CD8-positive, alpha-beta T cell (primary cell): ENCODE measurements at regions of chr6 and their contacts with region 1.

Region 1: DNA sequence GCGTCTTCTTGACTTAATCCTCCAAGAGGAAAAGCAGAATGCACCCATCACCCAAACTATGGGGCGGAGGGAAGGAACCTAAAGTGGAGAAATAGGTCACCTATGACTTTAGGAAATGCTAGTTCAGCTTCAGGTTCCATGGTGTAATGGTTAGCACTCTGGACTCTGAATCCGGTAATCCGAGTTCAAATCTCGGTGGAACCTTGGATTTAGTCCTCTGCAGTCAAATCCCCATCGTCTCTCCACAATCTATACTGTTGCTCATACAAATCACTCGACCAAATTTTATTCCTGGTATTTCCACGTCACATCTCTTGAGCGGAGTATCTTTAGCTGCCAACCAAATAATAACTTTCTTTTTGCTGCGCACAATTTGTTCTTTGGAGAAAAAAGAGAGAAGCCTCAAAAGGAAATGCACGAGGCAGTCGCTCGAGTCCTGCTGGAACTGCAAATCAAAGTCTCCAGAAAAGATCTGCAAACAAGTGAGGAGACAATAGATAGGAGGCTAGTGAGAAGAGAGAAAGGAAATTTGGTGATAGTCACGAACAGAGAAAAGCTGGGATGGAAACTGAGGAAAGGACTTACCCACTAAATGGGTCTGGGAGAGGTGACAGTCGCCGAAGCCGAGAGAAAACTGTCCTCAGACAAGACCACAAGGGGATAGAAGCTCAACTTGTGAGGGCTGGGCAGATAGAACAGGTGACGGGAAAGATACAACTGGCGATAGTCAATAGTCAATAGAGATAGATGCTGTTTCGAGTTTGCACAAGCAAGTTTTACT is 16.6 kb downstream of the POM121L2 start:
- DNase-seq: no peak
- ATAC-seq: no peak
- H3K4me3 ChIP-seq: no peak overlapping the region
- H3K4me3 Mint-ChIP-seq: no peak overlapping the region
- H3K27ac ChIP-seq: no peak overlapping the region
- H3K27ac Mint-ChIP-seq: peak overlapping the region; percentile 6
- H3K4me1 ChIP-seq: no peaks in the 10 kb centered on the region
- H3K4me1 Mint-ChIP-seq: no peaks in the 10 kb centered on the region
- H3K27me3 ChIP-seq: peaks cover 53 to 65% of the 10 kb centered on the region in 2 experiments
- H3K27me3 Mint-ChIP-seq: peaks cover 86% of the 10 kb centered on the region
- CTCF ChIP-seq: no peak

Region 2: GRCh38 chr6:27237089-27237803 is 58.2 kb before region 1 on chr6:
- CTCF ChIA-PET with region 1: no interaction called
- POLR2A ChIA-PET with region 1: no interaction called
- intact Hi-C with region 1: loop called in 1 of 2 experiments (anchors 5 kb)
- DNase-seq: peak in 3 of 9 experiments; percentile 13 to 50 (median 30)
- ATAC-seq: no peak
- H3K4me3 ChIP-seq: no peak overlapping the region
- H3K4me3 Mint-ChIP-seq: no peak overlapping the region
- H3K27ac ChIP-seq: no peak overlapping the region
- H3K27ac Mint-ChIP-seq: peak overlapping the region; percentile 18
- H3K4me1 ChIP-seq: no peaks in the 10 kb centered on the region
- H3K4me1 Mint-ChIP-seq: peaks cover 10% of the 10 kb centered on the region
- H3K27me3 ChIP-seq: peaks cover 31 to 44% of the 10 kb centered on the region in 2 experiments
- H3K27me3 Mint-ChIP-seq: peaks cover 69% of the 10 kb centered on the region
- CTCF ChIP-seq: no peak